ENCODE measurements at regions of chr1 and their contacts with region 1.

Region 1: DNA sequence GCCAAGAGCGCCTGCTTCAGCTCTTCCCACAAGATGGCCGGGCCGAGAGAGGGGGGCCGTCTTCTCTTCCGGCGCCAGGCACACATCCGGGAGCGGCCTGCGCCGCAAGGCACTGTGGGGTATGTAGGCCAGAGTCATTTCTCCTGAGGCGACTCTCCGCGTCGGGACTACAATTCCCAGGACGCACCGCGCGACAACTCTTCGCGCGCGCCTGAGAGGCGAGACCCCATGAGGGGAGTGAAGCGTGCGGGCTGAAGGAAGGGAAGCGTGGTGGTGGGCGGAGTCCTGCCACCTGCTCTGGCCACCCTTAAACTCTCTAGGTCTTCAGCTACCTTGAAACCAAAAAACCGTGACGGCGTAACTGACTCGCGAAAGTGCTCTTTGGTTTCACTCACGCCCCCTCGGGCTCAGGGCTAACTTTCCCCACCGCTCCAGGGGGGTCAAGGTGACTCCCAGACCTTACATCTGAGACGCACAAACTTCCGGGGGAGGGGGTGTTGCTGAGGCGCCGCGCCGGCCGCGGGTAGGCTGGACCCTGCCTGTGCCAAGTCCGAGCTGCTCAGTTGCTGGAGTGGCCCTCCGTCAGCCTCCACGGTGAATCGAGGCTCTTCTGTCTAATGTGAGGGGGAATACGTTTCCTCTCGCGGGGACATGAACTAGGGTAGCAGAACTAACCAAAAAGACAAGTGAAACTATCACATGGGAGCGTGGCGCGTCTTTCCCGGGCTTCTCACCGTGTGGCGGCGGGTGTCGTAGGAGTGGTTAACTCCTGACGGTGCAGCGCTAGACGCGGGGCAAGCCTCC is at the start of gene SERBP1:
- DNase-seq: peak; percentile 99
- H3K4me3 Mint-ChIP-seq: peak within 1 kb of the TSS; percentile 95
- H3K27ac Mint-ChIP-seq: peak within 1 kb of the TSS; percentile 98
- H3K4me1 Mint-ChIP-seq: peaks cover 47% of the 10 kb centered on the region
- H3K27me3 Mint-ChIP-seq: no peaks in the 10 kb centered on the region
- total RNA-seq, gene SERBP1: 619 and 630 TPM in 2 replicates

Region 2: DNA sequence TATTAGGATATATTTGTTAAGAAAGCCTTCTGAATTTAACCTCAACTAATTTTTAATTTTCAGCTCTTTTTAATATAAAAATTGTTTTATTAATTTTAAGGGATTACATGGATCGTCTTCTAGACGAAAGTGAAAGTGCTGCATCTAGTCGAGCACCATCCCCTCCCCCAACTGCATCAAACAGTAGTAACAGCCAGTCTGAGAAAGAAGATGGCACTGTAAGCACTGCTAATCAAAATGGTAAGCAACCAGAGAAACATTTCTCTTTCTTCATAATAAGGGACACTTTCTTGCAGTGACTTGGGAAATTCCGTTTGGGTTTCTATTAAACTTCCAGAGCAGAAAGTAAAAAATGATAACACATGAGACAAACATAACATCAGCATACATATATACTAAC is 448.9 kb before region 1 on chr1:
- intact Hi-C with region 1: loop called (anchors 5 kb)
- DNase-seq: peak; percentile 88
- H3K4me3 Mint-ChIP-seq: peak overlapping the region; percentile 79
- H3K27ac Mint-ChIP-seq: peak overlapping the region; percentile 35
- H3K4me1 Mint-ChIP-seq: peaks cover 27% of the 10 kb centered on the region
- H3K27me3 Mint-ChIP-seq: no peaks in the 10 kb centered on the region

Region 3: GRCh38 chr1:67031121-67031858 is 399.3 kb before region 1 on chr1:
- intact Hi-C with region 1: no loop called
- DNase-seq: no peak
- H3K4me3 Mint-ChIP-seq: no peak overlapping the region
- H3K27ac Mint-ChIP-seq: no peak overlapping the region
- H3K4me1 Mint-ChIP-seq: no peaks in the 10 kb centered on the region
- H3K27me3 Mint-ChIP-seq: no peaks in the 10 kb centered on the region

Region 4: GRCh38 chr1:67162957-67163356 is 267.6 kb before region 1 on chr1:
- intact Hi-C with region 1: loop called (anchors 2 kb)
- DNase-seq: peak; percentile 83
- H3K4me3 Mint-ChIP-seq: peak overlapping the region; percentile 39
- H3K27ac Mint-ChIP-seq: peak overlapping the region; percentile 89
- H3K4me1 Mint-ChIP-seq: peaks cover 39% of the 10 kb centered on the region
- H3K27me3 Mint-ChIP-seq: no peaks in the 10 kb centered on the region

Region 5: DNA sequence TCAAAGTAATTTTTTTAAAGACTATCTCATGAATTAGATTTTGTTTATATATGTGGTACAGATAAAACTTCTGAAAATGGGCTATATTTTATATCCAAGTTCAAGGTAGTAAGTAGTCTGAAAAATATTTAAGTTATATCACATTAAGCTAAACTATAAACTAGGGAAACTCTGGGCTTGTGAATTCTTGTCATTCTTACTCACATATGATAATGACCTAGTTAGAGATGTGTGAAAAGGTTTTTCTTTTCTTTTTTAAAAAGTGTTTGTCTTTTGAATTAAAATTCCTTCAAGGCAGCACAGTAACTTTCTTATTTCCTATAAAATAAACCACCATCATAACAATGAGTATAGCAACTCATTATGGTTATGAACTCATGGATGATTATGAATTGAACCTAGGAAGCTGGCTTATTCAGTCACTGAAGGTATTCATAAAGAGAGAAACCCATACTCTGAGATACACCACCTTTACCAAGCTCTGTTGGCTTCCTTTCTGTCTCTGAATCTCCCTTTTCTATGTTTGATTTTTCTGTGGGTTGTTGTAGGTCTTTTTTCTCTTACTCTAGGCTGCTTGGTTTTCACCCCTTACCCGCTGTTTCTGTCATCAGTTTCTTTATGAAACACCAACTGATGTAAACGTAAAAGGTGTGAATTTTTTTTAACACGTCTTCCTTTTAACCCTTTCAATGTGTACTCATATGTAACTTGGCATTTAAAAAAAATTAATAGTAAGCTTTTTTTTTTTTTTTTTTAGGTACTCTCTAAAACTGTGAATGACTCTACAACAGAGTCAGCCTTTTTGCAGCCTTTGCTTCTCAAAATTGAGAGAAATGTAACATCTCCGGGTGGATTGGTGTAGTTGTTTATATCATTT is 97.7 kb before region 1 on chr1:
- intact Hi-C with region 1: loop called (anchors 1 kb)
- DNase-seq: peak; percentile 86
- H3K4me3 Mint-ChIP-seq: peak overlapping the region; percentile 74
- H3K27ac Mint-ChIP-seq: peak overlapping the region; percentile 85
- H3K4me1 Mint-ChIP-seq: peaks cover 73% of the 10 kb centered on the region
- H3K27me3 Mint-ChIP-seq: no peaks in the 10 kb centered on the region

Region 6: DNA sequence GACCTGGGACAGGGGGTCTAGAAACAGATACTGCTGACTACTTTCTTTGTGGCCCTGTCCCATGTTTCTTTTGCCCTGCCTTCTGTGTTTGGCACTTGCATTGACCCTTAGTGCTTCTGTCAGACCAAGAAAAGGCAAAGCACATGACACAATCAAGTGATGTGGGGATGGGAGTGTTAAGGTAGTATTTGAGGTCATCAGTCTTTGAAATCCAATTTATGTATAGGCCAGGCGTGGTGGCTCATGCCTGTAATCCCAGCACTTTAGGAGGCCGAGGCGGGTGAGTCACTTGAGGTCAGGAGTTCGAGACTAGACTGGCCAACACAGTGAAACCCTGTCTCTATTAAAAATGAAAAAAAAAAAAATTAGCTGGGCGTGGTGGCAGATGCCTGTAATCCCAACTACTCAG is 26.3 kb before region 1 on chr1:
- intact Hi-C with region 1: loop called (anchors 2 kb)
- DNase-seq: no peak
- H3K4me3 Mint-ChIP-seq: no peak overlapping the region
- H3K27ac Mint-ChIP-seq: no peak overlapping the region
- H3K4me1 Mint-ChIP-seq: peaks cover 12% of the 10 kb centered on the region
- H3K27me3 Mint-ChIP-seq: no peaks in the 10 kb centered on the region

Region 7: GRCh38 chr1:67500413-67500959 is 69.9 kb after region 1 on chr1:
- intact Hi-C with region 1: loop called (anchors 1 kb)
- DNase-seq: peak; percentile 96
- H3K4me3 Mint-ChIP-seq: peak overlapping the region; percentile 53
- H3K27ac Mint-ChIP-seq: no peak overlapping the region
- H3K4me1 Mint-ChIP-seq: peaks cover 8% of the 10 kb centered on the region
- H3K27me3 Mint-ChIP-seq: peaks cover 8% of the 10 kb centered on the region